ENCODE measurements at regions of chr9 and their contacts with region 1.

Region 1: DNA sequence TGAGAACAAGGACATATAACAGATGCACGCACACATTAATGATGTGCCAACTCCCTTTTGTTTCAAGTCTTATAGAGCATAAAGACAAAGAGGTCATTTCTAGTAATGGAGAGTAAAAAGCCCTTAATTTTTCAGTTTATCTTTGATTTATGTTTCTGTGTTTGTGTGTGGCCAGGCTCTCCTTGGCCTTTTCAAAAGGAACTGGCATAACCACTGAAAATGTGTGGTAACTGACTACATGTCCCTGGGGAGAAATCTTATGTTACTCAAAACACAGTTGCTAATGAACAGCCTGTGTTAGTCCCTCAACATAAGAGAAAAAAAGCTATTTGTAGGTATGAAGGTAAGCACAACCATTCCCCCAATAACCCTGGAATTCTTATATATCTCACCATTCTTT is 47.6 kb upstream of the SHOC1 start:
- DNase-seq: no peak
- ATAC-seq: peak; percentile 78
- H3K4me3 Mint-ChIP-seq: no peak overlapping the region
- H3K27ac Mint-ChIP-seq: no peak overlapping the region
- H3K4me1 Mint-ChIP-seq: peaks cover 9% of the 10 kb centered on the region
- H3K27me3 Mint-ChIP-seq: peaks cover 7% of the 10 kb centered on the region
- CTCF ChIP-seq: no peak

Region 2: DNA sequence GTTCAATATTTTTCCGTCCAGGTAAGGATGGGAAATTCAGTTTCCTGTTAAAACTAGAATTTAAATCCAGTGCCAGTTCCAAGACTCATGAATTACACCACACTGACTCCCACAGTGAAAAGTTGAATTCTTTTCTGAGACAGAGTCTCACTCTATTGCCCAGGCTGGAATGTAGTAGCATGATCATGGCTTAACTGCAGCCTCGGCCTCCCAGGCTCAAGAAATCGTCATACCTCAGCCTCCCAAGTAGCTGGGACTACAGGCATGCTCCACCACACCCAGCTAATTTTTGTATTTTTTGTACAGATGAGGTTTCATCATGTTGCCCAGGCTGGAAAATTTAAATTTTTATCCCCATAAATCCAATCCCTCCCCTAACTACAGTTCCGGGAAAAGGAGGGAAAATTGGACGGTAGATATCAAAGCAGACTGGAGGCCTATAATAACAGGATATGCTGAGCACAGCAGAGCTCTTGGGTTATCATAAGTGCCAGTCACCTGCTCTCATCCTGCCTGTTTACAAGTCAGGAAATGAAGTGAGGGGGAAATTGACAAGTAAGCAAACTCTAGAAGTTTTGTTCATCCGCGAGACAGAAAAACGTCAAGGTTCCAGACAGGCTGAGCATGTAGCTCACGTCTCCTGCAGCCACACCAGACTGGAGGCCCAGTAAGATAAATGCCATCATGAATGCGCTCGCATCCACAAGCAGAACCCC is 160.0 kb after region 1 on chr9:
- CTCF ChIA-PET with region 1: no interaction called
- POLR2A ChIA-PET with region 1: interaction called, 16 read pairs
- intact Hi-C with region 1: no loop called
- DNase-seq: no peak
- ATAC-seq: no peak
- H3K4me3 Mint-ChIP-seq: peak overlapping the region; percentile 6
- H3K27ac Mint-ChIP-seq: peak overlapping the region; percentile 54
- H3K4me1 Mint-ChIP-seq: peaks cover 49% of the 10 kb centered on the region
- H3K27me3 Mint-ChIP-seq: no peaks in the 10 kb centered on the region
- CTCF ChIP-seq: no peak

Region 3: DNA sequence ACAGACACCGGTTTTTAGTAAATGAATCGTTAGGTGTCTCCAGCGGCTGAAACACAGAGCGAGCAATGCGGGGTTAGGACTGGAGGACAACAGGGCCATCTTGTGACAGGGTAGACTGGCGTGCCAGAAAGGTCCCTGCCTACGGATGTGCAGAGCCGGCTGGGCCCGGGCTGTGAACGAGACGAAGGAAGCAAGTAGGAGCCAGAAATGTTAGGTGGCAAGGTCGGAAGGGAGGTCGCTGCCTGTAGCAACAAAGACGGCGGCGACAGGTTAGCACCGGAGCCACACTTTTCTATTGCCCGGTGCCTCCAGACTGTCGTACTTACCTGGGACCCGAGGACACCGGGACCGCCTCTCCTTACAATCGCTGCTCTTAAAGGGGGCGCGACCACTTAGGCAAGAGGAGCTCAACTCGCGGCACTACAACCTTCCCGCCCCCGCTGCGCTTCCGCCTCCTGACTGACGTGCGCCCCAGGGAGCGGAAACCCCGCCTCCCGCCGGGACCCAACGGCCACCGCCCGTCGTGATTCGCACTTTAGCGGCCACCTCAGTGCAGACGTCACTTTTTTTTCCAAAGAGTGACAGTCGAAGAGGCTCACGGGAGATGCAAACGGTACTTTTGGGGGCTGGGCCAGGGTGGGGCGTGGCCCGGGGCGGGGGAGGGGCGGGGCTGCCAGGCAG is 875.5 kb after region 1 on chr9 and contains the start of gene INIP:
- CTCF ChIA-PET with region 1: no interaction called
- POLR2A ChIA-PET with region 1: no interaction called
- intact Hi-C with region 1: no loop called
- DNase-seq: peak; percentile 95
- ATAC-seq: peak; percentile 93
- H3K4me3 Mint-ChIP-seq: peak within 1 kb of the TSS; percentile 100
- H3K27ac Mint-ChIP-seq: peak within 1 kb of the TSS; percentile 98
- H3K4me1 Mint-ChIP-seq: peaks cover 19% of the 10 kb centered on the region
- H3K27me3 Mint-ChIP-seq: no peaks in the 10 kb centered on the region
- CTCF ChIP-seq: no peak
- total RNA-seq, gene INIP: 31.1 and 32.1 TPM in 2 replicates